CD4-positive, alpha-beta memory T cell (primary cell): ENCODE measurements at regions of chr19 and their contacts with region 1.

Region 1: GRCh38 chr19:45059278-45059965 is 16.9 kb downstream of the ZNF296 start:
- DNase-seq: peak; percentile 76 to 84 (median 81)
- H3K4me3 ChIP-seq: no peak overlapping the region
- H3K4me3 Mint-ChIP-seq: no peak overlapping the region
- H3K27ac ChIP-seq: no peak overlapping the region
- H3K27ac Mint-ChIP-seq: peak overlapping the region in 6 of 7 donors; percentile 57 to 87 (median 82)
- H3K4me1 ChIP-seq: no peaks in the 10 kb centered on the region
- H3K4me1 Mint-ChIP-seq: peaks cover 0 to 6% (median 4%) of the 10 kb centered on the region in 4 donors
- H3K27me3 ChIP-seq: no peaks in the 10 kb centered on the region
- H3K27me3 Mint-ChIP-seq: no peaks in the 10 kb centered on the region

Region 2: GRCh38 chr19:44689056-44689895 is 370.1 kb before region 1 on chr19:
- CTCF ChIA-PET with region 1: no interaction called
- POLR2A ChIA-PET with region 1: no interaction called
- intact Hi-C with region 1: loop called (anchors 2 kb)
- DNase-seq: peak; percentile 66 to 71 (median 68)
- H3K4me3 ChIP-seq: no peak overlapping the region
- H3K4me3 Mint-ChIP-seq: no peak overlapping the region
- H3K27ac ChIP-seq: no peak overlapping the region
- H3K27ac Mint-ChIP-seq: peak overlapping the region in 6 of 7 donors; percentile 8 to 80 (median 58)
- H3K4me1 ChIP-seq: peaks cover 22% of the 10 kb centered on the region
- H3K4me1 Mint-ChIP-seq: peaks cover 20 to 33% (median 26%) of the 10 kb centered on the region in 4 donors
- H3K27me3 ChIP-seq: no peaks in the 10 kb centered on the region
- H3K27me3 Mint-ChIP-seq: peaks cover 8 to 18% of the 10 kb centered on the region in 2 donors

Region 3: DNA sequence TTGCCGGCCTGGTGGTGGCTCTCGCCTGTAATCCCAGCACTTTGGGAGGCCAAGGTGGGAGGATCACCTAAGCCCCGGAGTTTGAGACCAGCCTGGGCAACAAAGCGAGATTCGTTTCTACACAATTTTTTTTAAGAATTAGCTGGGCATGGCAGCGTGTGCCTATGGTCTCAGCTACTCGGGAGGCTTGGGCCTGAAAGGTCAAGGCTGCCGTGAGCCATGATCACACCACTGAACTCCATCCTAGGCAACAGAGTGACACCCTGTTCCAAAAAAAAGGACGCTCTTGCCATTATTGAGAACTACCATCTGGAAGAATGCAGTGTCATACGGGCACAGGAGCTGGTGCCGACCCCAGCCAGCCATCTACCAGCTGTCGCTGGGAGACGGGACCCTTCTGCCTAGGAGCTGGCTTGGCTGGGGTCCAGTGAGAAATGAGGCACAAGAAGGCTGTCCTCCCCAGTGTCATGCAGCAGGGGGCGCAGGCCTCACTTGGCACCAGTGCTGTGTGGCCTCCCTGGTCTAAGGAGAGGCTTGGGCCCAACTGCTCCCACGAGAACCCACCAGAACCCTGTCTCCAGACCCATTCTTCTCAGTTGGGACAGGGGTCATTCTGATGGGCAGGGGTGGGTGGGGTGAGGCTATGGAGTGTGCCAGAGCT is 70.4 kb before region 1 on chr19:
- CTCF ChIA-PET with region 1: interaction called, 13 read pairs
- POLR2A ChIA-PET with region 1: no interaction called
- intact Hi-C with region 1: loop called (anchors 1 kb)
- DNase-seq: peak; percentile 58 to 74 (median 65)
- H3K4me3 ChIP-seq: no peak overlapping the region
- H3K4me3 Mint-ChIP-seq: peak overlapping the region in 1 of 8 donors; percentile 12
- H3K27ac ChIP-seq: no peak overlapping the region
- H3K27ac Mint-ChIP-seq: peak overlapping the region in 6 of 7 donors; percentile 47 to 83 (median 70)
- H3K4me1 ChIP-seq: no peaks in the 10 kb centered on the region
- H3K4me1 Mint-ChIP-seq: peaks cover 0 to 3% (median 1%) of the 10 kb centered on the region in 4 donors
- H3K27me3 ChIP-seq: no peaks in the 10 kb centered on the region
- H3K27me3 Mint-ChIP-seq: no peaks in the 10 kb centered on the region

Region 4: DNA sequence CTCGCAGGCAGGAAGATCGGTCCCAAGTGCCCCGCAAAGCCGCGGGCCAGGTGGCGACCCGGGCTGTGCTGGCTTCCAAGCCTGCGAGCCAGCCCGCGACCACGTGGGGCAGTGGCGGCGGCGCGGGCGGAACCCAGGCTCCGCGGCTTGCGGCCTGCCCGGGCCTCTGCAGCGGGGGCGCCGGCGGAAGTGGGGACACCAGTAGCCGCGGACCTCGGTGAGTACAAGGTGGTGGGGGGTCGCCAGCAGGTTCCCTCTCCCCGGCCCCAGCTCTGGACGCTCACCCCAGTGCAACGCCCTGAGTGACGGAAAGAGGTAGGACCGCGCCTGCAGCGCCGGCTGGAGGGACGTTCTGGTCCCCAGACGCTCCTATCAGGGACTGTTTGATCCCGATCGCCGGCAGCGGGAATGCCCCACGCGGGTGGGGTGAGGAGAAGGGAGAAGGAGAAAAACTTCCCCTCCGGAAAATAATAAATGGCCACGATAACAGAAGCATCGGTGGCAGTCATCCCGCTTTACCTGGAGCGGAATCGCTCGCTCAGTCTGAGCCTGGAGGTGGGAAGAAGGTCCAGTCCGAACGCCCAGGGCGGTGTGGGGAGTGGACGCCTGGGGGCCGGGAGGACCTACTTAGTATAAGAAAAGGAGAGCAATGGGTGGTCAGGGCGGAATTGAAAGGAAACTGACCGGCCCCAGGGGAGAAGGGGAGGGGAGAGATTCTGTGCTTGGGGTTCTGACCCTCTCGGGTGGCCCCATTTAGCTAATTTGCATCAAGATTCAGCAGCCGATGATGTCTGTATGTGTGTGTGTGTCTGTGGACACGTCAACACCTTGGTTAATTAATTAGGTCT is 19.9 kb after region 1 on chr19 and contains the start of gene GEMIN7:
- CTCF ChIA-PET with region 1: interaction called, 6 read pairs
- POLR2A ChIA-PET with region 1: interaction called, 5 read pairs
- intact Hi-C with region 1: loop called (anchors 1 kb)
- DNase-seq: peak; percentile 66 to 77 (median 72)
- H3K4me3 ChIP-seq: peak within 1 kb of the TSS; percentile 82 to 95
- H3K4me3 Mint-ChIP-seq: peak within 1 kb of the TSS; percentile 89 to 98 (median 93)
- H3K27ac ChIP-seq: peak within 1 kb of the TSS; percentile 80
- H3K27ac Mint-ChIP-seq: peak within 1 kb of the TSS; percentile 84 to 95 (median 88)
- H3K4me1 ChIP-seq: peaks cover 51% of the 10 kb centered on the region
- H3K4me1 Mint-ChIP-seq: peaks cover 25 to 60% (median 44%) of the 10 kb centered on the region in 4 donors
- H3K27me3 ChIP-seq: no peaks in the 10 kb centered on the region
- H3K27me3 Mint-ChIP-seq: no peaks in the 10 kb centered on the region
- total RNA-seq, gene GEMIN7: 15.9 to 17.6 TPM